Aorta (tissue), 5 donors: ENCODE measurements at regions of chr6 and their contacts with region 1.

Region 1: DNA sequence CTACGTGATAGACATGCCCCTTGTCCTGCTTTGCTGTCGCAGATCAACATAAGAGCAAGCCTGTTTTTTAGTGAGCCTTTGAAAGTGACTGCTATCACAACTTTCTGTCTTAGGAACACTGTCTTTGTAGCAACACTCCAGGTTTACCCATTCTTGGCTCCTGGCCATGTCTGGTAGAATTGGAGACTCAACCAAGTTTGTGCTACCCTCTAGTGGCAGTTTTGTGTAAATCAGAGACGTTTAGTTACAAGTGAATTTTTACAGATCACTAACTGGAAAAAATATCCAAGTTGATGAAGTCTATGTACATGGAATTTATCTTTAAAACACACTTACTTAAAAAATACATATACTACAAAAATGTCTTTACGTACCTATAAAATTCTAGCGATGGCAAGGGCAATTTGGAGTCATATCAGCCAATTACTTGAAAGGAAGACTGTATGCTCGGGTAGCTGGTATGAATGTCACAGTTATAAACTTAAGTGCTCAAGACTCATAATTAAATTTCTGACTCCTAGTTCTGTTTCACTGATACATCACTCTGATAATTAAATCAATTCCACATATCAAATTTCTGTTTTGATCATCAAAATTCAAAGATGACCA is 101.4 kb downstream of the ADGB start:
- DNase-seq: peak in 1 of 2 donors; percentile 71
- ATAC-seq: peak; percentile 80
- H3K4me3 ChIP-seq: no peak overlapping the region
- H3K27ac ChIP-seq: no peak overlapping the region
- H3K4me1 ChIP-seq: no peaks in the 10 kb centered on the region
- H3K27me3 ChIP-seq: no peaks in the 10 kb centered on the region

Region 2: DNA sequence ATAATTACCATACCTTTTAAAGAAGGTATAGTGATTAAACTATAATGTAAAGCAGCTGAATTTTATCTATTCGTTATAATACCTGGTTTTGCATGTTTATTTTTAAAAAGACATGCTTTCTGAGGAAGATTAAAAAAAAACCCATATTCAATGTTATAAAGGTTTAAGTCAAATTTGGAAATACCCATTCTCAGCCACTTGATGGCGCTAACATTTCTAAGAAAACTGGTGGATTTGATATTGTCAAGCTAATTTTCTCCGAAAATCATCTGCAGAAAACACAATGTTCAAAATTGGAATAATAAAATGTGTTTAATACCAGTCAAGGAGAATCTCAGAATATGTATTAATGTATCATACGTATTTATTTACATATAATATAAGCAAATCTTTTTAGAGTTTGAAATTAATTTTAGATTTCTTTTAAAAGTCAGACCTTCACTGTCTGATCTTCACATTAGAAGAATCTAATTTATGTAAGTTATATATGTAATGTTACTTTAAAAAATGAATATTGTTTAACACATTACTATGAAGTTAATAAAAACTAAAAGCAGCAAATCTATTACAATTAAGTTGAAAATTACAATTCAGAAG is 771.0 kb before region 1 on chr6:
- intact Hi-C with region 1: loop called in 1 of 2 experiments (anchors 10 kb)
- DNase-seq: no peak
- ATAC-seq: no peak
- H3K4me3 ChIP-seq: no peak overlapping the region
- H3K27ac ChIP-seq: no peak overlapping the region
- H3K4me1 ChIP-seq: no peaks in the 10 kb centered on the region
- H3K27me3 ChIP-seq: no peaks in the 10 kb centered on the region

Region 3: DNA sequence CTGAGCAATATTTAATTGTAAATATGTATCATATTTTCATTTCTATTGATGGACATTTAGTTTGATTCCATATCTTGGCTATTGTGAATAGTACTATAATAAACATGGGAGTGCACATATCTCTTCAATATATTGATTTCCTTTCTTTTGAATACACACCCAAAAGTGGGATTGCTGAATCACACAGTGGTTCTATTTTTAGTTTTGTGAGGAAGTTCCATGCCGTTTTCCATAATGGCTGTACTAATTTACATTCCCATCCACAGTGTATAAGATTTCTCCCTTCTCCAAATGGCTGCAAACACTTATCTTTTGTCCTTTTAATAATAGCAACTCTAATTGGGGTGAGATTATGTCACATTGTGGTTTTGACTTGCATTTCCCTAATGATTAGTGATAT is 243.3 kb before region 1 on chr6:
- intact Hi-C with region 1: no loop called
- DNase-seq: no peak
- ATAC-seq: no peak
- H3K4me3 ChIP-seq: no peak overlapping the region
- H3K27ac ChIP-seq: no peak overlapping the region
- H3K4me1 ChIP-seq: no peaks in the 10 kb centered on the region
- H3K27me3 ChIP-seq: no peaks in the 10 kb centered on the region